ENCODE measurements at regions of chr2 and their contacts with region 1.

Region 1: GRCh38 chr2:48727565-48727964 is 28.0 kb downstream of the LHCGR start:
- DNase-seq: no peak
- H3K4me3 ChIP-seq: no peak overlapping the region
- H3K27ac ChIP-seq: no peak overlapping the region
- H3K4me1 ChIP-seq: peaks cover 0 to 6% (median 3%) of the 10 kb centered on the region in 4 experiments; a peak in 4 of 7 replicates
- H3K27me3 ChIP-seq: no peaks in the 10 kb centered on the region
- CTCF ChIP-seq: peak in 1 of 3 experiments; percentile 1; a peak in 1 of 4 replicates
- EP300 ChIP-seq: no peak
- POLR2A ChIP-seq: no peak
- RAD21 ChIP-seq: peak; percentile 28 to 36; a peak in 3 of 4 replicates

Region 2: DNA sequence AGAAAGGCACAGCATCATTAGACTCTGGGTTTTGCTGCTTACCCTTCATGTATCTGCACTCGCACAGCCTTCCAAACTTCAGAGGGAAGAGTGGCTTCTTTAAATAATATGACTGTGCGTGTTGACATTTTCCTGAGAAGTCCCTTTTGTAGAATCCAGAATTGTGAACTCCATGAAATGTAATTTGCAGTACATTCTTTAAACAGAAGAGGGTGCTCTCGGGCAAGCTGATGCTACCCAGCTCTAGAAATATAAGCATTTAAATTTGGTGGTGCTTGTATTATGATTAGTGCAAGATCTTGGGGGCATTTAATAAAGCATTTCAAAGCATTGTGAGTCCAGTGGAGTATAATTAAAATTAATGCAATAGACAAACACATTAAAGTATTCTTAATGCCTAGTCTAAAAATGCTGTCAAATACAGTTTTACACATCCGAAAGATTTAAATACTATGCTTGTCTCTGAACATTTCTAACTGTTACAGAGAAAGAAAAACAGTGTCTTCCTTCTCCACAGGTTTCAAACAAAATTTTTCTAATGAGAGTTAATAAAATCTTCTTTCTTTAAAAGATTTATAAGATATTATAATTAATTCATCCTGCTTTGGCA is 127.3 kb before region 1 on chr2:
- CTCF ChIA-PET with region 1: interaction called, 16 read pairs
- POLR2A ChIA-PET with region 1: no interaction called
- DNase-seq: no peak
- H3K4me3 ChIP-seq: no peak overlapping the region
- H3K27ac ChIP-seq: no peak overlapping the region
- H3K4me1 ChIP-seq: no peaks in the 10 kb centered on the region
- H3K27me3 ChIP-seq: no peaks in the 10 kb centered on the region
- CTCF ChIP-seq: peak in 2 of 3 experiments; percentile 61 to 65; a peak in 2 of 4 replicates
- EP300 ChIP-seq: no peak
- POLR2A ChIP-seq: no peak
- RAD21 ChIP-seq: peak; percentile 88 to 89

Region 3: GRCh38 chr2:48707470-48707869 is 20.1 kb before region 1 on chr2:
- CTCF ChIA-PET with region 1: interaction called, 13 read pairs
- POLR2A ChIA-PET with region 1: no interaction called
- DNase-seq: no peak
- H3K4me3 ChIP-seq: no peak overlapping the region
- H3K27ac ChIP-seq: no peak overlapping the region
- H3K4me1 ChIP-seq: peaks cover 0 to 5% (median 0%) of the 10 kb centered on the region in 4 experiments; a peak in 1 of 7 replicates
- H3K27me3 ChIP-seq: no peaks in the 10 kb centered on the region
- CTCF ChIP-seq: no peak
- EP300 ChIP-seq: no peak
- POLR2A ChIP-seq: no peak
- RAD21 ChIP-seq: no peak

Region 4: DNA sequence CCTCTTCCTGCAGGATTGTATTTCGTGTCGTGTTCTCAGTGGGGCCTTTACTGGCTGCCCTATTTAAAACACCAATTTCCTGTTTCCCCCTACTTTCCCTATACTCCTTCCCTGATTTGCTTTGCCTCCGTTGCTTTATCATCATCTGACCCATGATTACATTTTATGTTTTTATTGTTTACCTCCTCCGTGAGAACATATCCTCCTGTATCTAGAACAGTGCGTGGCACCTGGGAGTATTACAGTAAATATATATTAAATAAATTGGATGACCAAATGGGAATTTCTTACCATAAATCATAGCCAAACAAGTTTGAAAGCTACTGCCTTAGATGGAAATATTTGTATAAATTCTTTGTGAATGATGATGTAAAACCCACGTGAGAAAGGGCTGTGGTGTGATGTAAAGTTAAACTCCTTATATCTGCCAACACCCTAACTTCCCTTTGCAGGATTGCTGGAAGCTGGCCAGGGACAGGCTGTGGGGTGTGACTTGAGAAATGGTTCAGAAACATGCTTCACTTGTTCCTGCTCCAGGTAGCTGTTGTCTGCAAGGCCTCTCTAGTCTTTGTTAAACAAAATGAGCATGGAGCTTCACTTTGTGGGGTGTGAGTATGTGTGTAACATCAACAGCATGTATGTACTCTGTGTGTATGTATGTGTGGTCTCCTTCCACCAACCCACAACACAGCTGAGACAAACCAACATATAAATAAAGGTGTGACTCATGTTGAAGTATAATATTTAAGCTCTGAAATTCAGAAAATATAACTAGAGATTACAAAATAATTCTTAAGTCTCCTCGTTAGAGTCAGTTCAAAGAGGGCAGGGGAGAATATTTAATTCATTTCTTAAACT is 12.3 kb before region 1 on chr2:
- CTCF ChIA-PET with region 1: interaction called, 16 read pairs
- POLR2A ChIA-PET with region 1: no interaction called
- DNase-seq: no peak
- H3K4me3 ChIP-seq: no peak overlapping the region
- H3K27ac ChIP-seq: no peak overlapping the region
- H3K4me1 ChIP-seq: peaks cover 0 to 5% (median 1%) of the 10 kb centered on the region in 4 experiments; a peak in 2 of 7 replicates
- H3K27me3 ChIP-seq: no peaks in the 10 kb centered on the region
- CTCF ChIP-seq: no peak
- EP300 ChIP-seq: no peak
- POLR2A ChIP-seq: no peak
- RAD21 ChIP-seq: no peak

Region 5: DNA sequence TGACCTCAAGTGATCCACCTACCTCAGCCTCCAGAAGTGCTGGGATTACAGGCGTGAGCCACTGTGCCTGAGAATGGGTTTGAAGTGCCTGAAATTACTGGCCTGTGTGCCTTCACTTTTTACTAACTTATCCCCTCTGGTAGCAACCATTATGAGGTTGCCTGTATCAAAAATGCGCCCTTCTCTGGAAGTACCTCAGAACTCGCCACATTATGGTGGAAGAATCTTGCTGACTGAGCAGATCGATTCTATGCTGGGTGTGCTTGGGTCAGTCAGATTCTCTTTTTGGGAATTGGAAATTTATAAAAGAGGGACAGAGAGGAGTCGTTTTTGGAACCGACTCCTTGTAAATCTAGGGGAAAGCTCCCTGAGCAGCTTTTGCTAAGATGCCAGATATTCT is 19.8 kb after region 1 on chr2:
- CTCF ChIA-PET with region 1: no interaction called
- POLR2A ChIA-PET with region 1: no interaction called
- DNase-seq: no peak
- H3K4me3 ChIP-seq: no peak overlapping the region
- H3K27ac ChIP-seq: no peak overlapping the region
- H3K4me1 ChIP-seq: no peaks in the 10 kb centered on the region
- H3K27me3 ChIP-seq: no peaks in the 10 kb centered on the region
- CTCF ChIP-seq: no peak
- EP300 ChIP-seq: no peak
- POLR2A ChIP-seq: no peak
- RAD21 ChIP-seq: no peak

Measured in H1 (cell line).